Dorsolateral prefrontal cortex (tissue), 120 donors: ENCODE measurements at regions of chr11 and their contacts with region 1.

Region 1: GRCh38 chr11:71080239-71081097 is 171.9 kb downstream of the SHANK2 start:
- DNase-seq: peak; percentile 37 to 92 (median 78)
- H3K4me3 ChIP-seq: peak overlapping the region in 1 of 59 donors; percentile 13
- H3K27ac ChIP-seq: no peak overlapping the region
- H3K27me3 ChIP-seq: peaks cover 0 to 9% (median 0%) of the 10 kb centered on the region in 45 donors
- CTCF ChIP-seq: peak; percentile 46 to 94 (median 81)

Region 2: DNA sequence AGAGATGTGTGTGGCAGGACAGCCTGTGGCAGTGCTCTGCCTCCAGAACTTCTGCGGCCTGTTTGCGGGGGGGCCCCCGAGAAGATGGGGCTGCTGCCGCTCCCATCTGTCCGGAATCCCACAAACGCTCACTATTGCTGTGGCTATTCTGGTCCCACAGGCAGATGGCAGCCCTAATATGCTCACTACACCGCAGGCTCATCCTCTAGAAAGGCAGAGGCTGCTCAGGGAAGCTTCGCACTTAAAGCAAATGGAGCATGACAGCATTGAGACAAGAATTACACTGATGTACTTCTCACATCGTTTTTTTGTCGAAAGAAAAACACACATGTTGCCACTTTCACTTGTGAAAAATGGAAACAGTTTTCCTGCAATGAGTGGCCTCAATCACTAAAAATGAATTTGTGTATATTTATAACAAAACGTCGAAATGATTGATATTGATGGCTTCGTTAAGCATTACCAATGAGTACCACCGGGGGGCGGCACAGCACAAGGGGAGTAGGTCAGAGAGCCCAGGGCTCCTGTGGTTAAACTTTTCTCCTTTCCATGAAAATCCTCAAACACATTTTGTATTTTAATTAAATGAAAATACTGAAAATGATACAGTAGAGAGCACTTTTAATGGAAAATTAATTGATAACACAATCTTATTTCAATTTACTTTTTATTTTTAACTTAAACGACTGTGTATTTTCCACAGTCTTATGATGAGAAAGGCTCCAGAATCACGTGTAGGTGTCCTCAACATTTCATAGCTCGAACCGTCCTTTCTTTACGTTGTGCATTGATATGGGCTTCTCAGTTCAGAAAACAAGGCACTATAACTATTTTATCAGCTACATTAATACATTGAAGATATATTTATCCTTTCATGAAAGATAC is 613.0 kb before region 1 on chr11:
- intact Hi-C with region 1: loop called (anchors 5 kb)
- DNase-seq: peak; percentile 61 to 74 (median 72)
- H3K4me3 ChIP-seq: peak overlapping the region in 2 of 59 donors; percentile 3 to 7
- H3K27ac ChIP-seq: peak overlapping the region in 2 of 59 donors; percentile 4 to 44
- H3K27me3 ChIP-seq: no peaks in the 10 kb centered on the region
- CTCF ChIP-seq: peak; percentile 78 to 99 (median 92)

Region 3: GRCh38 chr11:70755410-70756161 is 324.9 kb before region 1 on chr11:
- intact Hi-C with region 1: loop called in 1 of 2 experiments (anchors 5 kb)
- DNase-seq: peak; percentile 71 to 89 (median 84)
- H3K4me3 ChIP-seq: peak overlapping the region in 26 of 59 donors; percentile 3 to 40 (median 20)
- H3K27ac ChIP-seq: peak overlapping the region in 1 of 59 donors; percentile 14
- H3K27me3 ChIP-seq: peaks cover 0 to 3% (median 0%) of the 10 kb centered on the region in 45 donors
- CTCF ChIP-seq: peak; percentile 68 to 99 (median 97)

Region 4: GRCh38 chr11:70818351-70818750 is 262.1 kb before region 1 on chr11:
- intact Hi-C with region 1: loop called (anchors 5 kb)
- DNase-seq: no peak
- H3K4me3 ChIP-seq: peak overlapping the region in 1 of 59 donors; percentile 4
- H3K27ac ChIP-seq: no peak overlapping the region
- H3K27me3 ChIP-seq: peaks cover 0 to 15% (median 0%) of the 10 kb centered on the region in 45 donors
- CTCF ChIP-seq: no peak

Region 5: DNA sequence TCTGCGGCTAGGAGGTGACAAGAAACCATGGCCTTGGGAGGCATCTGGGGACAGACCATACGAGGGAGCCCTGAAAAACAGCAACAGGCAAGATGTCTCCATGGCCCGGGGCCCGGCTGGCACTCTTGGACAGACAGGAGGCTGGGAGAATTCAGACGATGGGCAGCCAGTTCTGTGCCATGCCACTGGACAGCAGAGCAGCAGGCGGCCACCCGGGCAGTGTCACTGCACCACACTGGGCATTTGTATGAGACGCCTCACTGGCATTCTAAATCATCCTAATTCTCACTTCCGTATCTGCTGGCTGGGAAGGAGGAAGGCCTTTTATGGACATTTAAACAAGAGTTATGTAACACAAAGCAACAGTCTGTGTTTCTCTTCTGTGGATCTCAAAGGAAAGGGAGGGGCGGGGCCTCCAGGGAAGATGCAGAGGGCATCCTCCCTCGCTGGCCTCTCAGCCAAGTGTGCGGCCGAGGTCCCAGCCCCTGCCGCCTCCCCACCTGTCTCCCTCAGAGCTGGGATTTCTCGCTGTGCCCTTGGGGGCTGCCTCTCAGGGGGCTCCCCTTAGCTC is 178.4 kb before region 1 on chr11:
- intact Hi-C with region 1: no loop called
- DNase-seq: peak in 3 of 10 donors; percentile 22 to 69 (median 43)
- H3K4me3 ChIP-seq: no peak overlapping the region
- H3K27ac ChIP-seq: peak overlapping the region in 2 of 59 donors; percentile 14 to 29
- H3K27me3 ChIP-seq: peaks cover 0 to 2% (median 0%) of the 10 kb centered on the region in 45 donors
- CTCF ChIP-seq: no peak